Caco-2 (cell line): ENCODE measurements at regions of chr10 and their contacts with region 1.

Region 1: DNA sequence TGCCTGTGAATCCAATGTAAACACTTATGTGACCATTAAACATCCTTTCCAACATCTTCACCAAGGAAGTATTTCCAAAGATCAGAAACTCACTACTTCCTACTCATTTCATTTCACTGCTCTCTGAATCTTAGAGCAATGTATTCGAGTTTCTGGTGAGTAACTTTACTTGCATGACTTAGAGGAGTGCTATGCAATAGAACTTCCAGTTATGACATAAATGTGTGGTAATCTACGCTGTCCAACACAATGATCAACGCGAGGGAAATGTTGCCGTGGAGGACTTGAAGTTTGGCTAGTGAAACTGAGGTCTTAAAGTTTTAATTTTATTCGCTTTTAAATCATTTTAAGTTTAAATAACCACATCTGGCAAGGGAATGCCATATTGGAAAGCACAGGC is 1326.3 kb downstream of the XPNPEP1 start:
- DNase-seq: no peak
- H3K4me3 ChIP-seq: no peak overlapping the region
- H3K4me3 Mint-ChIP-seq: no peak overlapping the region
- H3K27ac Mint-ChIP-seq: peak overlapping the region; percentile 77
- H3K4me1 ChIP-seq: peaks cover 47% of the 10 kb centered on the region
- H3K4me1 Mint-ChIP-seq: peaks cover 34% of the 10 kb centered on the region
- H3K27me3 ChIP-seq: no peaks in the 10 kb centered on the region
- H3K27me3 Mint-ChIP-seq: no peaks in the 10 kb centered on the region
- CTCF ChIP-seq: no peak

Region 2: DNA sequence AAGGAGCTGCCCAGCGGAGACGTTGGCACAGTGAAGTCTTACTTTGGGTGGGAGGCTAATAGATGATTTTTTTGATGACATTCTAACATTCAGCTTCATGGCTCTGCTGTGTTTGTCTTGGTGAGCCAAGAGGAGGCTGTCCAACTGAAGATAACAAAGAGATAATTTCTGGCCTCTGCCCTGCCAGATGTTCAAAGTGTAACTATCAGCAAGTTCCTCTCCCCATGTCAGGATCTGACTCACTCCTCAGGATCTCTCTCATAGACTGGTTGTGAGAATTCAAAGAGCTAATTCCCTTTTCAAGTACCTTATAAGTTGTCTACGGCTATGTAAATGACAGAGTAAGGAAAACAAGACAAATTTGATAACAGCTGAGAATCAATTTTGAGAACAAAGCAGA is 14.6 kb before region 1 on chr10:
- CTCF ChIA-PET with region 1: no interaction called
- POLR2A ChIA-PET with region 1: no interaction called
- intact Hi-C with region 1: loop called (anchors 1 kb)
- DNase-seq: peak; percentile 47 to 69
- H3K4me3 ChIP-seq: no peak overlapping the region
- H3K4me3 Mint-ChIP-seq: peak overlapping the region; percentile 10
- H3K27ac Mint-ChIP-seq: peak overlapping the region; percentile 31
- H3K4me1 ChIP-seq: peaks cover 49% of the 10 kb centered on the region
- H3K4me1 Mint-ChIP-seq: peaks cover 38% of the 10 kb centered on the region
- H3K27me3 ChIP-seq: no peaks in the 10 kb centered on the region
- H3K27me3 Mint-ChIP-seq: no peaks in the 10 kb centered on the region
- CTCF ChIP-seq: no peak

Region 3: DNA sequence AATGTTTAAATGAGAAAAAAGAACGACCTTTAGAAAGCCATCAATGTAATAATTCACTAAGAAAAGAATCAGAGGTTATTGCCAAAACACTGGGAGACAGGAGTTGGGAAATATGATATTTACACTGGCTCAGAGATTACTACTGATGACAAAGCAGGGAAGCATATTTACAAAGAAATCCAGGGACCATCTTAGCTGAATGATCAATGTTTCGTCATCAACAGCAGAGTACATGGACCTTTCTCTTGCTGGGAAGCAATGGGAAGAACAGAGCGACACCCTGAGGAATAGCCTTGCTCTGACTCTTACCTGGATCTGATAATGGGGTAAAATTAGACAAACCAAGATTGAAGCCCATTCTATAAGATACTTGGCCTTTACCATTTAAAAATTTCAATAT is 32.8 kb after region 1 on chr10:
- CTCF ChIA-PET with region 1: no interaction called
- POLR2A ChIA-PET with region 1: no interaction called
- intact Hi-C with region 1: loop called (anchors 1 kb)
- DNase-seq: peak; percentile 27 to 34
- H3K4me3 ChIP-seq: no peak overlapping the region
- H3K4me3 Mint-ChIP-seq: no peak overlapping the region
- H3K27ac Mint-ChIP-seq: no peak overlapping the region
- H3K4me1 ChIP-seq: peaks cover 7% of the 10 kb centered on the region; the same call in 1 of the 2 replicates
- H3K4me1 Mint-ChIP-seq: no peaks in the 10 kb centered on the region
- H3K27me3 ChIP-seq: no peaks in the 10 kb centered on the region
- H3K27me3 Mint-ChIP-seq: peaks cover 2% of the 10 kb centered on the region
- CTCF ChIP-seq: peak in 1 of 2 experiments; percentile 16

Region 4: DNA sequence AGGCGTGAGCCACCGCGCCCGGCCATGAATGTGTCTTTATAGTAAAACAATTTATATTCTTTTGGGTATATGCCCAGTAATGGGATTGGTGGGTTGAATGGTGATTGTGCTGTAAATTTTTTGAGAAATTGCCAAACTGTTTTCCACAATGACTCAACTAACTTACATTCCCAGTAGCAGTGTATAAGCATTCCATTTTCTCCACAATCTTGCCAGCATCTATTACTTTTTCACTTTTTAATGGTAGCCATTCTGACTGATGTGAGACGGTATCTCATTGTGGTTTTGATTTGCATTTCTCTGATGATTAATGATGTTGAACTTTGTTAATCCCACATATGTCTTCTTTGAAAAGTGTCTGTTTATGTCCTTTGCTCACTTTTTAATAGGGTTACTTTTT is 138.3 kb after region 1 on chr10:
- CTCF ChIA-PET with region 1: no interaction called
- POLR2A ChIA-PET with region 1: no interaction called
- intact Hi-C with region 1: no loop called
- DNase-seq: no peak
- H3K4me3 ChIP-seq: no peak overlapping the region
- H3K4me3 Mint-ChIP-seq: no peak overlapping the region
- H3K27ac Mint-ChIP-seq: no peak overlapping the region
- H3K4me1 ChIP-seq: no peaks in the 10 kb centered on the region
- H3K4me1 Mint-ChIP-seq: no peaks in the 10 kb centered on the region
- H3K27me3 ChIP-seq: no peaks in the 10 kb centered on the region
- H3K27me3 Mint-ChIP-seq: no peaks in the 10 kb centered on the region
- CTCF ChIP-seq: no peak

Region 5: DNA sequence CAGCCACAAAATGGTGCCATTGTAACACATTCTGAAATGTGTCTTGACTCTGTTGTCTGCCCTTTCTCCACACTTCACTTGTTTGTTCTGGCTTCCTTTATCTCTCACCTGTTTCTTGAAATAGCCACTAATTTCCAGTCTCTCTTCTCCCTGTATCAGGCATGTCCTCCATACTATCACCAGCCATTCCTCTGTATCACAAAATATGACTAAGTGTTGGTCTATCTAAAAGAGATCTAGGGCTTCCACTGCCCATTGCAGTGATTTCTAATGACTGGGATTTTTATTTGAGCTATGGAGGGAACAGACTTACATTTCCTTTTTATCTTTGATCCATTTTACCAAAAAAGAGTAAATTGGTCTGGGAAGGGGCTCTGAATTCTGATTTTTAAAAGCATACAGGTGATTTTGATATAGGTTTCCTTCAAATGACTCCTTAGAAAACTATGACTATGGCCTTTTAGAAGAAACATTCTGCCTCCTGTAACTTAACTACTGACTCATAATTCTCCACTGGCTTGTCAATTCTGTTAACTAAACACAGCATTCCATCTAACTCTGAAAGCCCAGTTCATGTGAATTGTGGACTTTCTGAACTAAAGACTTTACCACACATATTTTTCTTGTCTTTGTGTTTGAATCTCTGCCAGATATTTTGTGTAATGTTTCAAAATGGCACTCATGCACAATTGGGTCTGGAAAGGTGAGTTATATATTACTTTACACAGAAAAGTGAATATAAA is 204.9 kb after region 1 on chr10:
- CTCF ChIA-PET with region 1: no interaction called
- POLR2A ChIA-PET with region 1: no interaction called
- intact Hi-C with region 1: no loop called
- DNase-seq: no peak
- H3K4me3 ChIP-seq: no peak overlapping the region
- H3K4me3 Mint-ChIP-seq: no peak overlapping the region
- H3K27ac Mint-ChIP-seq: no peak overlapping the region
- H3K4me1 ChIP-seq: no peaks in the 10 kb centered on the region
- H3K4me1 Mint-ChIP-seq: no peaks in the 10 kb centered on the region
- H3K27me3 ChIP-seq: no peaks in the 10 kb centered on the region
- H3K27me3 Mint-ChIP-seq: no peaks in the 10 kb centered on the region
- CTCF ChIP-seq: no peak

Region 6: DNA sequence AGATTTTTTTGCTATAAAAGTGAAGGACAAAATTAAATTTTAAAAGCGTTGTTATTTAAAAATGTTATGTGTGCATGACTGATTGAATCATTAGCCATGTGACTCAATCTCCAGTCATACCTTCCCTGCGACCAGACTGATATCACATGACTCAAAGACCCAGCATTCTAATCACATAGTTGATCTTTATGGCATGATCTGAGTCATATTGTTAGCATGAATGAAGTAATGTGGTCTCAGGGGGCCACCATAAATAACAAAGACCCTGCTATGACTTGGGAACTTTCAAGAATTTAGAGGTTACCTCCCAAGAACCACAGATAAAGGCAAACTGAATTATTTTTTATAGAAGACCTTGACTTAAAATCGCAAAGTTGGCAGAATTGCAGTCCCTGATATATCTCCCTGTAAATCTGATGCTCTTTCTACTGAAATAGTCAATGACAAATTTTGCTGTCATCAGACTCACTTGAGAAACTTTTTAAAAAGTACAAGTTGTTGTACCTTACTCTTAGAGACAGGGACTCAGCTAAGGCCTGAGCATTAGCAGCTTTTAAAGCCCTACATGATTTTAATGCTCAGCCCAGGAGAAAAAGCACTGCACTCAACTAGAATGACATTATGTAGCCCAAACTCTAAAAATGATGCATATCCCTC is 609.0 kb after region 1 on chr10:
- CTCF ChIA-PET with region 1: no interaction called
- POLR2A ChIA-PET with region 1: no interaction called
- intact Hi-C with region 1: loop called (anchors 5 kb)
- DNase-seq: no peak
- H3K4me3 ChIP-seq: no peak overlapping the region
- H3K4me3 Mint-ChIP-seq: no peak overlapping the region
- H3K27ac Mint-ChIP-seq: no peak overlapping the region
- H3K4me1 ChIP-seq: peaks cover 6% of the 10 kb centered on the region; the same call in 1 of the 2 replicates
- H3K4me1 Mint-ChIP-seq: peaks cover 4% of the 10 kb centered on the region
- H3K27me3 ChIP-seq: no peaks in the 10 kb centered on the region
- H3K27me3 Mint-ChIP-seq: no peaks in the 10 kb centered on the region
- CTCF ChIP-seq: no peak

Region 7: GRCh38 chr10:109996225-109996624 is 1399.2 kb after region 1 on chr10:
- CTCF ChIA-PET with region 1: no interaction called
- POLR2A ChIA-PET with region 1: no interaction called
- intact Hi-C with region 1: loop called (anchors 10 kb)
- DNase-seq: no peak
- H3K4me3 ChIP-seq: peak overlapping the region; percentile 28
- H3K4me3 Mint-ChIP-seq: peak overlapping the region; percentile 73
- H3K27ac Mint-ChIP-seq: peak overlapping the region; percentile 82
- H3K4me1 ChIP-seq: peaks cover 92% of the 10 kb centered on the region
- H3K4me1 Mint-ChIP-seq: peaks cover 54% of the 10 kb centered on the region
- H3K27me3 ChIP-seq: no peaks in the 10 kb centered on the region
- H3K27me3 Mint-ChIP-seq: no peaks in the 10 kb centered on the region
- CTCF ChIP-seq: no peak